Dendritic cell treated with granulocyte-macrophage colony-stimulating factor and Interleukin-4, amounts not matched to agents 40 ng/mL and 50 ng/mL, for 4 days (primary cell): ENCODE measurements at regions of chr3 and their contacts with region 1.

Region 1: DNA sequence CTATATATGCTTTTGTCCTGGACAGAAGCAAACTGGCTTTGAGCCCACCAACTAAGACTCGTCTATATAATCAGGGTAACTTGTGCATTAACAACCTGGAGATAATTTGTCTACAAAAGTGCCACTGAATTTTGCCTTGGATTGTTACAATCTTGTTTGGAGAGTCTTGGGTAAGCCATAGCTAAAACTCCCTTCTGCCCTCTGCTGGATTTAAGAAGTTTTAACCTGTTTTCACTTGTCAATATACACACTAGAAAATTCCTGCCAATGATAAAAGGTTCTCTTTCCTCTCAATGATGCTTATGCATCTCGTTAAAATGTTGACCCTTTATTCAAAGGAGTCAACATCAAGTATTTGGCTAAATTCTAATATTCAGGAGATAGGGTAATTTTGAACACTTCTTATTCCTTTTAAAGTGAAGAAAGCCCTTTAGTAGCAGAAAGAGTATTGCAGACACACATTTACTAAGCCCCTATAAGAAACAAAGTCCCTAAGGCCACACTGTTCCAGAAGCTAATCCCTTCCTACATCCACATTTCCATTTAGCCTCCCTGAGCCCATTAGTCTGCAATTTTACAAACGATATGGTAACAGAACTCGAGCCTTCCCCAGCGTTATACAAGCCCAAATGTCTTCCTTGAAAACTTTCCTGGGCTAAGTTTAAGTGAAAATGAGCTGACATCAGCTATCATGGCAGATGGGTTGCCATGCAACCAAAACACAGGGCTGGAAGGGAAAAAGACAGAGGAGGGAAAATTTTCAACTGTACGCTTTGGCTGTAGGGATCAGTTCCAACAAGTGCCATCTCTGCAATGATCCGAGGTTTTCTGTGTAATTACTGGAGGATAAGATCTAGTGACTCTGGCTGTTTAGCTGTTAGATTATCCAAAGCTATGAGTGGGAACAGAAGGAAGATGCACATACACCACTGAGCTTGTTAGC is 75.9 kb upstream of the FGF12 start:
- H3K4me3 Mint-ChIP-seq: no peak overlapping the region
- H3K27ac Mint-ChIP-seq: no peak overlapping the region
- H3K4me1 Mint-ChIP-seq: no peaks in the 10 kb centered on the region
- H3K27me3 Mint-ChIP-seq: no peaks in the 10 kb centered on the region

Region 2: DNA sequence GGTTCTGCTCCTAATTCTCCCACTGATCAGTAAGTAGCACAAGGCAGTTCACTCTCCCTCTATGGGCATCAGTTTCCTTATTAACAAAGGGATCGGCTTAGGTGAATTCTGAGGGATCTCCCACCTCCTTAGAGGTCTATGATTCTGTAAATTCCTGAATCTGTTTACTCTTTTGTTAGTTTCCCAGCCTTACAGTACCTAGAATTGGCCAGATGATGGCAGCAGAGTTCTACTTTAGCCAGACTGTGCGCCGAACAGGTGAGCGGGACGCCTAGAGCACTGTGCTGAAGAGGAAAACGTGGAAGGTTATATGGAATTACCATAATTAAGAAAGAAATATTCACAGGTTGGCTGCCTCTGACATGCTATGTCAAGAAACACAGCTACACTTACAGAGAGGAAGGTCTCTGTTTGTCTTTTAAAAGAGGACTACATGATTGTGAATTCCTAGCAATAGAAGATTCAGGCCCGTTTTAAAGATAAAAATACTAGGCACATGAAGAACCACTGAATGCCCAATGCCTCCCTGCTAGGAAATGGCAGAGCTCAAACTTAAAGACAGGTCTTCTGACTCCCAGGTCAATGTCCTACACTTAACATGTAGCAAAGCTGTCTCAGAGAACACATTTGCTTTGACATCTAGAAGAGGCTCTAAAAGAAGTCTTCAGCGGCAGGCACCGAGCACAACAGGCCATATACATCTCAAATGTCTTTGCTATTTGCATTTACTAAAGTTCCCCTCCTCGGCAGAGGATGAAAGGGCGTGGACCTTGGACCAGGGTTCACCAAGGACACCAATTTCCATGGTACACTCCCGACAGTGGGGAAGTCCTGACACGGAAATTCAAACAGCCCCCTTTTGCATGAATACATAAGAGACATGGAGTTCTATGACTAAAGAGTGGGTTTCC is 335.7 kb before region 1 on chr3:
- intact Hi-C with region 1: loop called (anchors 5 kb)
- H3K4me3 Mint-ChIP-seq: no peak overlapping the region
- H3K27ac Mint-ChIP-seq: no peak overlapping the region
- H3K4me1 Mint-ChIP-seq: no peaks in the 10 kb centered on the region
- H3K27me3 Mint-ChIP-seq: peaks cover 4% of the 10 kb centered on the region

Region 3: GRCh38 chr3:192566706-192567290 is 236.4 kb before region 1 on chr3:
- intact Hi-C with region 1: loop called (anchors 5 kb)
- H3K4me3 Mint-ChIP-seq: no peak overlapping the region
- H3K27ac Mint-ChIP-seq: no peak overlapping the region
- H3K4me1 Mint-ChIP-seq: peaks cover 10% of the 10 kb centered on the region
- H3K27me3 Mint-ChIP-seq: peaks cover 15% of the 10 kb centered on the region